ENCODE measurements at regions of chr2 and their contacts with region 1.

Region 1: DNA sequence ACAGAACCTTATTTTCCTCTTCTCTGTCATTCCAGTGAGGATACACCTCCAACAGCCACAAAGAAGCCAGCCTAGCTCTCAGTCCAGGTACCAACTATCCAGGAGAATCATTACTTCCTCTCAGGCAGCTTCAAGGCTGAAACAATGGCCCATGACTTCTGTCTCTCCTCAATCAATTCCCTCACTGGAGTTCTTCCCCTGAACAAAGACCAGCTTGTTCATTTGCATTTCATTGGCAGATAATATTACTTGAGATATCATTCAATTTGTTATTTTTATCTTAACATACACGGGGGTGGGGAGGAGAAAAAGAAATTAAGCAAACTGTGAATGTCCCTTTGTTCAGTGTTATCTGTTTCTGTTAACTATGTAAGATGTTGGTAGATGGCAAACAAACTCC is 44.0 kb downstream of the CCDC141 start:
- DNase-seq: no peak
- ATAC-seq: no peak
- H3K4me3 Mint-ChIP-seq: no peak overlapping the region
- H3K27ac Mint-ChIP-seq: no peak overlapping the region
- H3K4me1 Mint-ChIP-seq: peaks cover 4% of the 10 kb centered on the region
- H3K27me3 Mint-ChIP-seq: no peaks in the 10 kb centered on the region
- CTCF ChIP-seq: no peak

Region 2: DNA sequence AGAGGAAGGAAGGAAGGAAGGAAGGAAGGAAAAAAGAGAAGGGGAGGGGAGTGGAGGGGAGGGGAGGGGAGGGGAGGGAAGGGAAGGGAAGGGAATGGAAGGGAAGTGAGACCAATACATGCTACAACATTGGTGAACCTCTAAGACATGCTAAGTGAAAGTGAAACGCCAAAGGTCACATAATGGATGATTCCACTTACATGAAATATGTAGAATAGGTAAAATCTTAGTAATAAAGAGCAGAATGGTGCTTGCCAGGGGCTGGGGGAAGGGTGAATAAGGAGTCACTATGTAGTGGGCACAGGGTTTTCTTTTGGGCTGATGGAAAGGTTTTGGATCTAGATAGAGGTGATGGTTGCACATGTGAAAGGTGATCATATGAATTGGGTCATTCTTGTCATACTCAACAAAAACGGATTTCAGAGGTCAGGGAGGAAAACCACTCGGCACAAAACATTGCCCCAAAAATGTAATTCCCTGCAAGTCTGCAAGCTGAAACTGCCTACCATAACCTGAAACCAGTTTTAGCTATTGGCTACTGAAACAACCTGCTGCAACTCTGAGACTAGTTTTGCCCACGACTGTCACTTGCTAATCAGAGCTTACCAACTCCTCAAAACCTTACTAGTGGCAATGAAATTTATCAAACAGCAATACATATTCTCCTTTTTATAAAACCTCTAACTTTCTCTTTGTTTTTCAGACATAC is 15.3 kb before region 1 on chr2:
- CTCF ChIA-PET with region 1: no interaction called
- POLR2A ChIA-PET with region 1: interaction called, 3 read pairs
- intact Hi-C with region 1: loop called (anchors 2 kb)
- DNase-seq: no peak
- ATAC-seq: peak; percentile 54
- H3K4me3 Mint-ChIP-seq: peak overlapping the region; percentile 76
- H3K27ac Mint-ChIP-seq: peak overlapping the region; percentile 81
- H3K4me1 Mint-ChIP-seq: peaks cover 12% of the 10 kb centered on the region
- H3K27me3 Mint-ChIP-seq: no peaks in the 10 kb centered on the region
- CTCF ChIP-seq: no peak